Vagina (tissue), 2 donors: ENCODE measurements at regions of chr16 and their contacts with region 1.

Region 1: GRCh38 chr16:29940656-29941055 is 14.6 kb upstream of the KCTD13 start:
- DNase-seq: no peak
- H3K4me3 ChIP-seq: no peak overlapping the region
- H3K27ac ChIP-seq: no peak overlapping the region
- H3K4me1 ChIP-seq: peaks cover 19% of the 10 kb centered on the region
- H3K27me3 ChIP-seq: no peaks in the 10 kb centered on the region
- CTCF ChIP-seq: no peak
- POLR2A ChIP-seq: no peak

Region 2: DNA sequence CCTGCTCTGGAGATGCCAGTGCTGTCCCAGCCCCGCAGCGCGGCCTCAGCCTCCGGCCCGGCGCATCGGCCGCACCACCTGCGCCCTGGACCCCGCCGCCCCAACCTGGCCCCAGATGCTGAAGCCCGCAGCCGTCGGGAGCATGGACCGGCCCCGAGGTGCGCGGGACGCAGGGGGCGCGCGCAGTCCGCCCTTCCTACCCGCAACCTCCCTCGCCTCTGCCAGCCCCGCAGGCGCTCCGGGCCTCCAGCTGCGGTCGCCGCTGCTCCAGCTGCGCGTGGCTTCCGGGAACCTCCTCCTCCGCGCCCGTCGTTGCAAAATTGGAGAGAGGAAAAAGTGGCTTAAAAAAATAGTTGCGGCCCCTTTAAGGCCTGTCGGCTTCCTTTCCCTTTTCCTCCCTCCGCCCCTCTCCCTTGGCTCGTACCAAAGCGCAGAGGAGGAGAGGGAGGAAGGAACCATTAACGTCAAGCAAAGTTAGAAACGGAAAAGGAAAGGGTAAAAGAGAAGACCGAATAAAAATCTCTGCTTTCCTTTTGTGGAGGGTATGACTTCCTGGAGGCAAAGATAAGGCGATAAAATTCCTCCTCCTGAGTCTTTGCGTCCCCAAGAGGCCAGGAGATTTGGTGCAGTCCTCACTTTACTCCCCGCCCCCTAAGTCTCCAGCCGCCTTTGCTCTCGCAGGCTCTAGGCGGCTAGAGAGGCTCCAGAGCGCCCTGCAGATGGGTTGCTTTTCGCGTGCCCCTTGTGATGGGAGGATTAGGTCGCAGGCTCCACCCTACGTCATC is 77.6 kb before region 1 on chr16 and contains the start of gene CDIPT:
- intact Hi-C with region 1: no loop called
- DNase-seq: peak in 1 of 2 donors; percentile 95
- H3K4me3 ChIP-seq: peak within 1 kb of the TSS; percentile 84 to 100
- H3K27ac ChIP-seq: peak within 1 kb of the TSS; percentile 91
- H3K4me1 ChIP-seq: peaks cover 25% of the 10 kb centered on the region
- H3K27me3 ChIP-seq: no peaks in the 10 kb centered on the region
- CTCF ChIP-seq: peak; percentile 3 to 87 (median 59)
- POLR2A ChIP-seq: peak in 1 of 2 donors; percentile 11
- total RNA-seq, gene CDIPT: 89.4 TPM

Region 3: DNA sequence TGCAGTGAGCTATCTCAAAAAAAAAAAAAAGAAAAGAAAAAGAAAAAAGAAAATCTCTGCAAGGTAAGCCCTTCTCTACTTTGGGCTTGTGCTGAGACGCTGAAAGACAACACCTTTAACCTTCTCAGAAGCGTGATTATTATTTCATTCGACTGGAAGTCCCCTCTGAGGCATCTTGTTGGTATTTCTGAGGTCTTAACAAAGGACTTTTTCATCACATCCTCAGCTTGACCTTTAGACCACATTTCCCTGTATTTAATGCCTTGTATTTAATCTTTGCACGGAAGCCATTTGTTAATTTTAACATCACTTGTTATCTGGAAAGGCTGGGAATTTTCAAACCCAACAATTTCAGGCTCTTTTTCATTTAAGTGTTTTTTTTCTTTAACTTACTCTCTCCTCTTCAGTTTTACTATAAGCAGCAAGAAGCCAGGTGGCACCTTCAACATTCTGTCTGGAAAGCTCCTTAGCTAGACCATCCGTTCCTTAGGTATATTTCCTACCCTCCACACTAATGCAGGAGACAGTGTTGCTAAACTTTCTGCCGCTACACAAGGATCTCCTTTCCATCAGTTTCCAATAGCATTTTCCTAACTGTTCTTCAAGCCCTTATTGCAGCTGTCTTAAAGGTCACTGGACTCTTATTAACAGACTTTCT is 24.9 kb before region 1 on chr16:
- intact Hi-C with region 1: loop called (anchors 1 kb)
- DNase-seq: no peak
- H3K4me3 ChIP-seq: no peak overlapping the region
- H3K27ac ChIP-seq: no peak overlapping the region
- H3K4me1 ChIP-seq: no peaks in the 10 kb centered on the region
- H3K27me3 ChIP-seq: no peaks in the 10 kb centered on the region
- CTCF ChIP-seq: no peak
- POLR2A ChIP-seq: no peak